ENCODE measurements at regions of chr16 and their contacts with region 1.

Region 1: GRCh38 chr16:28846080-28846932 is at the start of gene TUFM:
- DNase-seq: peak; percentile 98
- H3K4me3 ChIP-seq: peak within 1 kb of the TSS; percentile 100
- H3K4me1 ChIP-seq: peaks cover 4% of the 10 kb centered on the region
- H3K27me3 ChIP-seq: no peaks in the 10 kb centered on the region

Region 2: GRCh38 chr16:28946681-28947080 is 100.4 kb after region 1 on chr16:
- in situ Hi-C with region 1: loop called (anchors 5 kb)
- DNase-seq: no peak
- H3K4me3 ChIP-seq: no peak overlapping the region
- H3K4me1 ChIP-seq: peaks cover 7% of the 10 kb centered on the region
- H3K27me3 ChIP-seq: no peaks in the 10 kb centered on the region

Region 3: DNA sequence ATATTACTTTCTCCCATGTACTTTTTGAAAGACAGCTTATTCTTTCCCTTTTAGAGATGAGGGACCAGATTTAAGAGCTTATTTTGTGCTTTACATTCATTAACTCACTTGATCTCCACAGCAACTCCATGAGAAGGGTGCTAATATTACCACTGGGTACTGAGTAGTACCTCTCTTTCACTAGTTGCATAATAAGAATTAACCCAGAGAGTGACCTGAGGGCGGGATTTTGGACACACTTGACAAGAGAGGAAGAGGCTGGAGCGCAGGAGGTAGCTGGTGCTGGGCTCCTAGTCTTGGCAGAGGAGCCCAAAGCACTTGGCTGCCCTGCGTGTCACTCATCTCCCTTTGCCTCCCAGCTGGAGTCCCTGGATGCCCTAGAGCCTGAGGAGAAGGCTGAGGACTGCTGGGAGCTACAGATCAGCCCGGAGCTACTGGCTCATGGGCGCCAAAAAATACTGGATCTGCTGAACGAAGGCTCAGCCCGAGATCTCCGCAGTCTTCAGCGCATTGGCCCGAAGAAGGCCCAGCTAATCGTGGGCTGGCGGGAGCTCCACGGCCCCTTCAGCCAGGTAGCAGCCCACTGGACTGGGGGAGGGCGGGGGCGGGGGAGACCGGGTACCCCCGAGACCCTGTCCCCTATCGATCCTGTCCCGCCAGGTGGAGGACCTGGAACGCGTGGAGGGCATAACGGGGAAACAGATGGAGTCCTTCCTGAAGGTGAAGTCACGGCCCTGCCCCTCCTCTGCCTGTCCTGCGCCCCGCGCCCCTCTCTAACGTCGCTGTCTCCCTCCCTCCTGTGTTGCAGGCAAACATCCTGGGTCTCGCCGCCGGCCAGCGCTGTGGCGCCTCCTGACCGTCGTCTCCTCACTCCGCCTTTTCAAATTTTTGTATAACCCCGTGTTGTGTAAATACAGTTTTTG is 958.4 kb after region 1 on chr16:
- in situ Hi-C with region 1: no loop called
- DNase-seq: peak; percentile 19 to 53
- H3K4me3 ChIP-seq: peak overlapping the region; percentile 47
- H3K4me1 ChIP-seq: peaks cover 14% of the 10 kb centered on the region
- H3K27me3 ChIP-seq: no peaks in the 10 kb centered on the region